ENCODE measurements at regions of chr9 and their contacts with region 1.

Region 1: DNA sequence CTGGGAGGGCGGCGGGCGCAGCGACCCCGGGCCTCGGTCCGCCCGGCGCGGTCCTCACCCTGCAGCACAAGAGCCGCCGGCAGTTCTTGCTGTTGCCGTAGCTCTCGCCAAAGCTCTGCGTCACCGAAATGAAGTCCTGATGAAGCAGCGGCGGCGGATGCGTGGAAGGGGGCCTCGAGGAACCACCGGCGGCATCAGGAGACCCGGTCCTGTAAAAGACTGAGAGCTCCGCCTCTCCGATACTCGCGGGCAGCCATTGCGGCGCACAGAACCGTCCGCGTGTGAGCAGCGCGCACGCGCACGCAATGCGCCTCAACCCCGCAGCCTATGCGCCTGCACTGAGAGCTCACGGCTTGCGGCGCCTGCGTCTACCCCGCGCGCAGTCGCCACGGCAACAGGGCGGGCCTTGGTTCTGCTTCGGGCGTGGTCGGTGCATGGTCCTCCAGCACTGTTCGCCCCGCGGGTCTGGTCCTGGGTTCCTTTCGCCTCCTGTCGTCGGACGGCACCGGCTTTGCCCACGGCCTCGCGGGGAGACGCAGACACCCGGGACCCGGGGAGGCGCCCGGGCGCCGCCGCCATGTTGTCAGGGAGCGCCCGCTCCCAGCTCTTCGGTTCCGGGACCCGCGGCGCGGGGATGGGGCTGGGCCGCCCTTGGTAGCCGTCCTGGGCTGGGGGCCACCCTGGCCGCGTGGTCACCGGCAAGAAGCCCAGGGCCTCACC is 9.3 kb upstream of the GRIN1 start:
- DNase-seq: peak; percentile 91
- H3K4me3 Mint-ChIP-seq: peak overlapping the region; percentile 90
- H3K27ac Mint-ChIP-seq: peak overlapping the region; percentile 79
- H3K4me1 Mint-ChIP-seq: peaks cover 24% of the 10 kb centered on the region
- H3K27me3 Mint-ChIP-seq: peaks cover 5% of the 10 kb centered on the region

Region 2: DNA sequence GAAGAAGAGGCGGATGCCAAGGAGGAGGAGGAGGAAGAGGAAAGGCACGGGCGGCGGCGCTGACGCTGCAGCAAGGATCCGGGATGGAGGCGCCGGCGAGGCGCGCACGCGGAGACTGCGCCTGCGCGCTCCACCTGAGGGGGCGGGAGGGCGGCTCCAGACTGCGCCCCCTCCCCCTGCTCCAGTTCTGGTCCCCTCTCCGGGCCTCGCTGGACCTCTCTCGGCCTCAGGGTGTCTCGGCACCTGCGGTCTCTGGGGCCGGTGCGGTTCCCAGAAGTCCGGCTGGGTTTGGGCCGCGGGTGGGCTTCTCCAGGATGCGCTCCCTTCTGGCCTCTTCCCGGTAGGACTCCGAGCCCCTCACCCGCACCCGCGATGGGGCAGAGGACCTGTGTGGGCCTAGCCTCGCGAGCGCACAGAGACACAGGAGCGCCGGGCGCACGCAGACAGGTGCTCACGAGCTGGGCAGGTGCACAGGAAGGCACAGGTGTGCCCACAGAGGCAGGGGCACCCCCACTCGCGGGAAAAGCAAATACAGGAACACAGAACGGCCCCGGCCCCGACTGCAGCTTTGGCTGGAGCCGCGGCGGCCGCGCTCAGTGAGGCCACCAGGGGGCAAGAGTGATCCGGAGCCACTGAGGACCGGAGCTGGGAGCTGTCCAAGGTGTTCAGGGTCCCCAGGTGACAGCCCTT is 83.4 kb before region 1 on chr9 and contains the start of gene NPDC1:
- intact Hi-C with region 1: loop called (anchors 5 kb)
- DNase-seq: peak; percentile 81
- H3K4me3 Mint-ChIP-seq: peak within 1 kb of the TSS; percentile 77
- H3K27ac Mint-ChIP-seq: peak within 1 kb of the TSS; percentile 44
- H3K4me1 Mint-ChIP-seq: peaks cover 5% of the 10 kb centered on the region
- H3K27me3 Mint-ChIP-seq: peaks cover 29% of the 10 kb centered on the region
- total RNA-seq, gene NPDC1: 78.2 and 80.1 TPM in 2 replicates

Region 3: GRCh38 chr9:137162505-137163100 is 33.0 kb after region 1 on chr9:
- intact Hi-C with region 1: loop called (anchors 5 kb)
- DNase-seq: no peak
- H3K4me3 Mint-ChIP-seq: no peak overlapping the region
- H3K27ac Mint-ChIP-seq: no peak overlapping the region
- H3K4me1 Mint-ChIP-seq: no peaks in the 10 kb centered on the region
- H3K27me3 Mint-ChIP-seq: peaks cover 34% of the 10 kb centered on the region

Measured in activated T-helper 1 cell treated with anti-CD3 and anti-CD28 coated beads, Interleukin-12 subunit alpha, Interleukin-12 subunit beta, Interleukin-2, Interleukin-4 antibody, amounts not matched to agents 30 ng/mL and 10 ng/mL and 1 ng/mL, durations not matched to agents 14 hours and 24 hours and 36 hours (primary cell).